A673 (cell line): ENCODE measurements at regions of chr20 and their contacts with region 1.

Region 1: DNA sequence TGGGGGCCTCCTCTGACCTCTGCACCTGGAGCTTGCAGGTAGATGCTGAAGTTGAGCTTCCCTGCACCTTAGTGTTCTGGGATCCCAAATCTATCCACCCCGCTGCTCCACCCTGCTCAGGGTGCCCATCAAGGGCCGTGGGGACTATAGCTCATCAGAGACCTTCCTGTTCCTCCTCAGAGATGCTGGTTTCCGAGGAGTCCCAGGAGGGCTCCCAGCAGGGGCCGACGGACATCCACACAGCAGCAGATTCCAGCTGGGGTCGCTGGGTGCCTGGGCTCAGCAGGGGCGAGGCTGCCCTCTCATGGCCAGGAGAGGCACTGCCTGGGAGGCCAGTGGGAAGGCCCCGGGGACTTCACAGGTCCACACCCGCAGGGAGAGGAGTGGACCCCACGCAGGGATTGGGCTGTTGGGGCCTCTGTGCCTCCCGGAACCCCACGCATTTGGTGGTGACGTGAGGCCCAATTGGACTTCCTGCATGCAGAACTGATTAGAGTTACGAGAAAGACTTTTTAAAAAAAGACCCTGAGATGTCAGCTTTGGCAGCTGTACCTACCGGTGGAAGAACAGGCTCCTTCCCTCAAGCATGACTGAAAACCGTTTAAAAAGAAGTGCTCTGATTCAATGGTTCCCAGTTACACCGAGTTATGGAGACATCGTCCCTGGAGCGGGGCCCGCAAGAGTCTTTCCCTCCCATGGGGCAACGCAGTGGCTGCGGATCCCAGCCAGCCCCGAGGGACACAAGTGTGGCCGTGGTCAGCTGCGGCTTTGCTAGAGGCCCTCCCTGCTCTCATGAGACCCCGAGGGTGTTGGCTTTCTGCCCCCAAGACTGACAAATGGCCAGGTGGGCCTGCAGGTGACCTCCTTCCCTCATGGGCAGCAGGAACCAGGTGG is 25.3 kb upstream of the SLCO4A1 start:
- DNase-seq: peak; percentile 79
- H3K4me3 ChIP-seq: no peak overlapping the region
- H3K27ac ChIP-seq: no peak overlapping the region
- H3K4me1 ChIP-seq: no peaks in the 10 kb centered on the region
- H3K27me3 ChIP-seq: no peaks in the 10 kb centered on the region
- CTCF ChIP-seq: peak; percentile 98

Region 2: GRCh38 chr20:62409931-62410745 is 206.8 kb before region 1 on chr20:
- CTCF ChIA-PET with region 1: interaction called, 6 read pairs
- POLR2A ChIA-PET with region 1: no interaction called
- intact Hi-C with region 1: loop called (anchors 2 kb)
- DNase-seq: peak; percentile 64
- H3K4me3 ChIP-seq: no peak overlapping the region
- H3K27ac ChIP-seq: no peak overlapping the region
- H3K4me1 ChIP-seq: peaks cover 6% of the 10 kb centered on the region
- H3K27me3 ChIP-seq: no peaks in the 10 kb centered on the region
- CTCF ChIP-seq: peak; percentile 83

Region 3: GRCh38 chr20:62461157-62461556 is 155.8 kb before region 1 on chr20:
- CTCF ChIA-PET with region 1: no interaction called
- POLR2A ChIA-PET with region 1: no interaction called
- intact Hi-C with region 1: no loop called
- DNase-seq: no peak
- H3K4me3 ChIP-seq: no peak overlapping the region
- H3K27ac ChIP-seq: no peak overlapping the region
- H3K4me1 ChIP-seq: no peaks in the 10 kb centered on the region
- H3K27me3 ChIP-seq: no peaks in the 10 kb centered on the region
- CTCF ChIP-seq: no peak

Region 4: GRCh38 chr20:62500237-62500864 is 116.6 kb before region 1 on chr20:
- CTCF ChIA-PET with region 1: interaction called, 29 read pairs
- POLR2A ChIA-PET with region 1: no interaction called
- intact Hi-C with region 1: loop called (anchors 2 kb)
- DNase-seq: peak; percentile 79
- H3K4me3 ChIP-seq: no peak overlapping the region
- H3K27ac ChIP-seq: no peak overlapping the region
- H3K4me1 ChIP-seq: no peaks in the 10 kb centered on the region
- H3K27me3 ChIP-seq: no peaks in the 10 kb centered on the region
- CTCF ChIP-seq: peak; percentile 95

Region 5: DNA sequence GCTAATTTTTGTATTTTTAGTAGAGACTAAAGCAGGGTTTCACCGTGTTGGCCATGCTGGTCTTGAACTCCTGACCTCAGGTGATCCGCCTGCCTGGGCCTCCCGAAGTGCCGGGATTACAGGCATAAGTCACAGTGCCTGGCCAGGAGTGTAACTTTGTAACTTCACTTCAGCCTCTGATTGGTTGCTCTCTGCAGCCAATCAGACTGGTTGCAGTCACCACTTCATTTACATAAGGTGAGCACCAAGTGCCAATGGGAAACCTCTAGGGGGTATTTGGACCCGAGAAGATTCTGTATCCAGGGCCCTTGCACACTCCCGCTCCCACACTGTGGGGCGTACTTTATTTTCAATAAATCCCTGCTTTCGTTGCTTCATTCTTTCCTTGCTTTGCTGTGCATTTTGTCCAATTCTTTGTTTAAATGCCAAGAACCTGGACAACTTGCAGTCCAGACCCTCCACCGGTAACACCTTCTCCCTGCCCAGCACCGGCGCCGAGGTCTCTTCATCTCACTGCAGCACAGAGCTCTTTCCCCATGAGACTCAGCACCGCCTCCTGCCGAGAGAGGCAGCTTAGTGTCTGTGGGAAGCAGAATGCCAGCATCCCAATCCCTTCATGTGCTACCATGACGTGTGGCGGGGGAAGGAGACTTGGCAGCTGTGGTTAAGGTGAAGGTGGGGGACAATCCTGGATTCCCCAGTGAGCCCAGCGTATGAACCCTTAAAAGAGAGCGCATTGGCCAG is 165.3 kb after region 1 on chr20:
- CTCF ChIA-PET with region 1: no interaction called
- POLR2A ChIA-PET with region 1: no interaction called
- intact Hi-C with region 1: no loop called
- DNase-seq: peak; percentile 64
- H3K4me3 ChIP-seq: no peak overlapping the region
- H3K27ac ChIP-seq: no peak overlapping the region
- H3K4me1 ChIP-seq: peaks cover 18% of the 10 kb centered on the region
- H3K27me3 ChIP-seq: no peaks in the 10 kb centered on the region
- CTCF ChIP-seq: peak; percentile 52